HCT116 (cell line): ENCODE measurements at regions of chr3 and their contacts with region 1.

Region 1: DNA sequence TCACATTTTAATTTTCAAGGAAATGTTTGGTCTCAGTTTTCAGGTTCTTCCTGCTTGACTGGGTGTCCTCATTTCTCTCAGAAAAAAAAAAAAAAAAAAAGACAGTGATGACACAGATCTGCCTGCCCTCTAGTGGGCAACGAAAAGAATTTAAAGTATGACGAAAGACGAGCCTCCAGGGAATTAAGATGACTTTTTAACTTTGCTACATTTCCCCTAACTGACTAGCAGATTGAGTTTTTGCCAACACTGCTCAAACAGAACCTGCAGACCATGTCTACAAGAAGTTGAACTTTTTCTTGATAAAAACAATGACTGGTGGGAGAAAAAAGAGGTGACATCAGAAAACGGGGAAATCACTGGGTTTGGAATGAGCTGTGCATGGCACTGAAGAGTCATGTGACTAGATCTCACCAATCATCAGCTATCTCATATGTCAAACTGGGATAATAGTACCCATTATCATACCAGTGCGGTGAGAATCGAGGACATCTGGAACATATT is 40.8 kb downstream of the EOMES start:
- DNase-seq: peak; percentile 78
- ATAC-seq: peak; percentile 93
- H3K4me3 ChIP-seq: peak overlapping the region; percentile 17 to 42; a peak in 2 of 4 replicates
- H3K27ac ChIP-seq: no peak overlapping the region
- H3K4me1 ChIP-seq: peaks cover 0 to 19% of the 10 kb centered on the region in 2 experiments; a peak in 2 of 4 replicates
- H3K27me3 ChIP-seq: no peaks in the 10 kb centered on the region
- CTCF ChIP-seq: peak; percentile 52 to 75 (median 75)
- POLR2A ChIP-seq: no peak
- RAD21 ChIP-seq: peak; percentile 86

Region 2: DNA sequence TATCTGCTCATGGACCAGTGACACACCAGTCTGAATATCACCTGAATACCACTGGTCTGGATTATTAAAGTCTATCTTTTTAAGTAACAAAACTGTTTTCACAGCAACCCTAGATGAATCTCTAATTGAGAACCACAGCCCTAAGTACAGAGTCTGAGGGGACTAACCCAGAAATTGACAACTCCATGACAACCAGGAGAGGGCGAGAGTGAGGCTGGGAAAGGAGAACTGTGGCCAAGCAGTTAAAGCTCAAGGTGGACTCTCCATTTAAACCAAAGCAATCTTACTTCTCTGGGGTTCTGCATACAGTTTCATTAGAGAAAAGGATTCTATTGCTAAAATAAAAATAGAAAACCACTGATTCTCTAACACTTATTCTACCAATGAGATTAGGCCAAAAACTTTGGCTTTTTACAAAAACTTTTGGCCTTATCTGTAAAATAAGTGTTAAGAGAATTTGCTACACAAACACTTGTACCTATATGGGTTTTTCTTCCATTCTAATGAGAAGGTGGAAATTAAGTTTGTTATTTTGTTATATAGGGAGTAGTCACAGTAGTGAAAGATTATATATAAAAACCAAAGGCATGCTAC is 323.5 kb before region 1 on chr3:
- CTCF ChIA-PET with region 1: interaction called, 7 read pairs
- POLR2A ChIA-PET with region 1: no interaction called
- RAD21 ChIA-PET with region 1: no interaction called
- intact Hi-C with region 1: loop called (anchors 5 kb)
- DNase-seq: peak; percentile 59
- ATAC-seq: peak; percentile 99
- H3K4me3 ChIP-seq: no peak overlapping the region
- H3K27ac ChIP-seq: no peak overlapping the region
- H3K4me1 ChIP-seq: peaks cover 7 to 9% of the 10 kb centered on the region in 2 experiments; a peak in 3 of 4 replicates
- H3K27me3 ChIP-seq: no peaks in the 10 kb centered on the region
- CTCF ChIP-seq: peak; percentile 73 to 81 (median 78)
- POLR2A ChIP-seq: no peak
- RAD21 ChIP-seq: peak; percentile 71

Region 3: DNA sequence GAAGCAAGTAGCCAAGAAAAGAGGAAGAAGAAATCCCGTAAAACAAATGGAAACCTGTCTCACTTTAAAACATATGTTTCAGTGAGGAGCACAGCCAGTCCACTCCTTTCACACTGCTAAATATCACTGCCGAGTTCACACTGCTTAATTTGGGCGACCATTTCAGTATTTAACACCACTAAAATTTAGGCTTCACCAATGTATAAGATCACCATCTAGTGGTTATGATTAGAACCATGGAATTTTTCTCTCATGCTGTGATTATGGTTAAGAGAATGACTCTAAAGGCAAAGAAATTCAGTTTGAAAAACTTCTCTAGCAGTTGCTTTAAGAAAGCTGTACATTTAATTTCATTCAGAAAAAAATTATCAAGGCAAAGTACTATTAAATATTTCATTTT is 213.8 kb before region 1 on chr3:
- CTCF ChIA-PET with region 1: interaction called, 3 read pairs
- POLR2A ChIA-PET with region 1: no interaction called
- RAD21 ChIA-PET with region 1: no interaction called
- intact Hi-C with region 1: loop called (anchors 1 kb)
- DNase-seq: no peak
- ATAC-seq: peak; percentile 82
- H3K4me3 ChIP-seq: no peak overlapping the region
- H3K27ac ChIP-seq: no peak overlapping the region
- H3K4me1 ChIP-seq: peaks cover 3 to 23% of the 10 kb centered on the region in 2 experiments; a peak in 3 of 4 replicates
- H3K27me3 ChIP-seq: no peaks in the 10 kb centered on the region
- CTCF ChIP-seq: peak; percentile 38 to 70 (median 56); a peak in 3 of 6 replicates
- POLR2A ChIP-seq: no peak
- RAD21 ChIP-seq: peak; percentile 63

Region 4: GRCh38 chr3:27554706-27555105 is 126.6 kb before region 1 on chr3:
- CTCF ChIA-PET with region 1: no interaction called
- POLR2A ChIA-PET with region 1: no interaction called
- RAD21 ChIA-PET with region 1: no interaction called
- intact Hi-C with region 1: no loop called
- DNase-seq: no peak
- ATAC-seq: no peak
- H3K4me3 ChIP-seq: no peak overlapping the region
- H3K27ac ChIP-seq: no peak overlapping the region
- H3K4me1 ChIP-seq: peaks cover 2 to 13% of the 10 kb centered on the region in 2 experiments; a peak in 3 of 4 replicates
- H3K27me3 ChIP-seq: no peaks in the 10 kb centered on the region
- CTCF ChIP-seq: no peak
- POLR2A ChIP-seq: no peak
- RAD21 ChIP-seq: no peak